ENCODE measurements at regions of chr13 and their contacts with region 1.

Region 1: DNA sequence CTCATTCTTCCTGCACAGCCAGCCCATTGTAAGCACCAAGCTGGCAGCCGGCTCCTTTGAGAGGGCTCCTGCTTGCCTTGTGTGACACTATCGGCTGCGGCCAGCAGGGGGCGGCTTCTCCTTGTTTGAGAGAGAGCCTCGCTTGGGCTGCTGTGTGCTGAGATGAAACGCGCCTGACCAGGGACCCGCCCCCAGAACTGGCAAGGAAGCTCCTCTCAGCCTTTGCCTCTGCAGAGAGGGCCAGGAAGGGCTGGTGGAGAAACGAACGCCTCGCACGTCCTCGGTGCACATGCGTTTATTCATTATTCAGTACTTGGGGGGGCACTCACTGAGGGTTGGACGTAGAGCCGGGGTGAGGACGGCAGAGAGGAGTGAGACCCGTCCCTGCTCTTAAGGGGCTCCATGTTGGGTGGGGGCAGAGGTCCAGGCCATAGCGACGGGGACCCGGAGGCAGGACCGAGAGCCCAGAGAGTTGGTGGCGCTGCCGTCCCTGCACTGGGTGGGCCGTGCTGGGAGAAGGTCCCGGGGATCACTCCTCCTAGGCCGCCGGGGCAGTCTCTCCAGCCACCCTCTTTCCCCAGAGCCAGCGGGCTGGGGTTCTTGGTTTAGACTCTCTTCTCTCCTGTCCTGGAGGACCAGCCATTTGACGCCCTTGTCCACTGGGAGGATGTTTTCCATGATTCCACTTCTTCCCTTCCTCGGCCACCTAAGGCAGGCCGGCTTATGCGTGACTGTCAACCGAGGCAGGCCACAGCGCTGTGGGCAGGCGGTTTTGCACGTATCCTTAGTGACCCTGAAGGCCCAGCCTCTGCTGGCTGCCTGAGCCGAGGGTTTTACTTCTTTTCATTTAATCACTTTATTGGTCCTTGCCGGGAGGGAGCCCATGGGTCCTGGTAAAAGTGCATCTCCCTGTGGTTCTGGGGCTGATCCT is 174.5 kb downstream of the KATNAL1 start:
- DNase-seq: peak; percentile 91 to 98 (median 95)
- ATAC-seq: peak; percentile 99
- H3K4me3 ChIP-seq: peak overlapping the region; percentile 16
- H3K4me3 Mint-ChIP-seq: peak overlapping the region in 8 of 10 donors; percentile 33 to 73 (median 64)
- H3K27ac ChIP-seq: no peak overlapping the region
- H3K27ac Mint-ChIP-seq: peak overlapping the region in 8 of 9 donors; percentile 11 to 89 (median 72)
- H3K4me1 ChIP-seq: peaks cover 4 to 7% of the 10 kb centered on the region in 2 donors
- H3K4me1 Mint-ChIP-seq: peaks cover 12 to 19% (median 17%) of the 10 kb centered on the region in 7 donors
- H3K27me3 ChIP-seq: no peaks in the 10 kb centered on the region
- H3K27me3 Mint-ChIP-seq: no peaks in the 10 kb centered on the region

Region 2: DNA sequence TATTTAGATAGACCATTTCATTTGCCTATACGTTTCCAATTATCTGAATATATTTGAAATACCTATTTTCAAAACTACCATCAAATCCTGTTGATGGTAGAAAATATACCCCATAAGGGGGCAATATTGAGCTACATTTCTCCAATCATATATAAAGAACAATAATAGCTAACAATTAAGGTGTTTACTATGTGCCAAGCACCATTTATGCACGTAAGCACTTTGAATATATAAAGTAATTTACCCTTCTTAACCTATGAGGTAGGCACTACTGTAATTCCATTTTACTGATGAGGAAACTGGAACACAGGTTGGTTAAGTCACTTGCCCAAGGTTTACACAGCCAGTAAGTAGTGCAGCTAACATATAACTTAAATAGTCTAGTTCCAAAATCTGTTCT is 361.6 kb before region 1 on chr13:
- CTCF ChIA-PET with region 1: interaction called, 23 read pairs
- POLR2A ChIA-PET with region 1: no interaction called
- intact Hi-C with region 1: no loop called
- DNase-seq: peak in 7 of 9 donors; percentile 31 to 67 (median 52)
- ATAC-seq: peak; percentile 77
- H3K4me3 ChIP-seq: no peak overlapping the region
- H3K4me3 Mint-ChIP-seq: no peak overlapping the region
- H3K27ac ChIP-seq: no peak overlapping the region
- H3K27ac Mint-ChIP-seq: peak overlapping the region in 1 of 9 donors; percentile 11
- H3K4me1 ChIP-seq: no peaks in the 10 kb centered on the region
- H3K4me1 Mint-ChIP-seq: peaks cover 0 to 14% (median 4%) of the 10 kb centered on the region in 7 donors
- H3K27me3 ChIP-seq: no peaks in the 10 kb centered on the region
- H3K27me3 Mint-ChIP-seq: no peaks in the 10 kb centered on the region

Region 3: GRCh38 chr13:29978211-29978610 is 154.7 kb before region 1 on chr13:
- CTCF ChIA-PET with region 1: no interaction called
- POLR2A ChIA-PET with region 1: no interaction called
- intact Hi-C with region 1: no loop called
- DNase-seq: no peak
- ATAC-seq: no peak
- H3K4me3 ChIP-seq: no peak overlapping the region
- H3K4me3 Mint-ChIP-seq: no peak overlapping the region
- H3K27ac ChIP-seq: no peak overlapping the region
- H3K27ac Mint-ChIP-seq: no peak overlapping the region
- H3K4me1 ChIP-seq: no peaks in the 10 kb centered on the region
- H3K4me1 Mint-ChIP-seq: peaks cover 0 to 10% (median 0%) of the 10 kb centered on the region in 7 donors
- H3K27me3 ChIP-seq: no peaks in the 10 kb centered on the region
- H3K27me3 Mint-ChIP-seq: peaks cover 0 to 13% (median 0%) of the 10 kb centered on the region in 5 donors

Region 4: GRCh38 chr13:30148171-30148754 is 15.4 kb after region 1 on chr13:
- CTCF ChIA-PET with region 1: interaction called, 100 read pairs
- POLR2A ChIA-PET with region 1: interaction called, 16 read pairs
- intact Hi-C with region 1: loop called (anchors 1 kb)
- DNase-seq: peak in 7 of 9 donors; percentile 43 to 83 (median 69)
- ATAC-seq: peak; percentile 89
- H3K4me3 ChIP-seq: peak overlapping the region; percentile 7
- H3K4me3 Mint-ChIP-seq: peak overlapping the region; percentile 43 to 81 (median 75)
- H3K27ac ChIP-seq: peak overlapping the region; percentile 37
- H3K27ac Mint-ChIP-seq: peak overlapping the region; percentile 87 to 98 (median 93)
- H3K4me1 ChIP-seq: peaks cover 59 to 83% of the 10 kb centered on the region in 2 donors
- H3K4me1 Mint-ChIP-seq: peaks cover 41 to 96% (median 88%) of the 10 kb centered on the region in 7 donors
- H3K27me3 ChIP-seq: no peaks in the 10 kb centered on the region
- H3K27me3 Mint-ChIP-seq: no peaks in the 10 kb centered on the region

Region 5: GRCh38 chr13:30257468-30258099 is 124.7 kb after region 1 on chr13:
- CTCF ChIA-PET with region 1: interaction called, 4 read pairs
- POLR2A ChIA-PET with region 1: no interaction called
- intact Hi-C with region 1: loop called in 1 of 2 experiments (anchors 2 kb)
- DNase-seq: no peak
- ATAC-seq: no peak
- H3K4me3 ChIP-seq: no peak overlapping the region
- H3K4me3 Mint-ChIP-seq: no peak overlapping the region
- H3K27ac ChIP-seq: no peak overlapping the region
- H3K27ac Mint-ChIP-seq: peak overlapping the region in 2 of 9 donors; percentile 18 to 62
- H3K4me1 ChIP-seq: no peaks in the 10 kb centered on the region
- H3K4me1 Mint-ChIP-seq: peaks cover 0 to 21% (median 14%) of the 10 kb centered on the region in 7 donors
- H3K27me3 ChIP-seq: no peaks in the 10 kb centered on the region
- H3K27me3 Mint-ChIP-seq: no peaks in the 10 kb centered on the region

Region 6: GRCh38 chr13:30346153-30346788 is 213.4 kb after region 1 on chr13:
- CTCF ChIA-PET with region 1: interaction called, 3 read pairs
- POLR2A ChIA-PET with region 1: no interaction called
- intact Hi-C with region 1: loop called in 1 of 2 experiments (anchors 2 kb)
- DNase-seq: peak in 7 of 9 donors; percentile 59 to 86 (median 73)
- ATAC-seq: peak; percentile 94
- H3K4me3 ChIP-seq: peak overlapping the region; percentile 7
- H3K4me3 Mint-ChIP-seq: peak overlapping the region; percentile 46 to 82 (median 75)
- H3K27ac ChIP-seq: no peak overlapping the region
- H3K27ac Mint-ChIP-seq: peak overlapping the region; percentile 23 to 84 (median 62)
- H3K4me1 ChIP-seq: peaks cover 29 to 31% of the 10 kb centered on the region in 2 donors
- H3K4me1 Mint-ChIP-seq: peaks cover 35 to 60% (median 48%) of the 10 kb centered on the region in 7 donors
- H3K27me3 ChIP-seq: no peaks in the 10 kb centered on the region
- H3K27me3 Mint-ChIP-seq: peaks cover 0 to 2% (median 0%) of the 10 kb centered on the region in 5 donors

Region 7: GRCh38 chr13:30572859-30573275 is 440.0 kb after region 1 on chr13:
- CTCF ChIA-PET with region 1: interaction called, 6 read pairs
- POLR2A ChIA-PET with region 1: no interaction called
- intact Hi-C with region 1: loop called (anchors 1 to 2 kb)
- DNase-seq: peak in 7 of 9 donors; percentile 19 to 65 (median 49)
- ATAC-seq: peak; percentile 69
- H3K4me3 ChIP-seq: peak overlapping the region; percentile 55
- H3K4me3 Mint-ChIP-seq: peak overlapping the region; percentile 66 to 88 (median 81)
- H3K27ac ChIP-seq: peak overlapping the region; percentile 81
- H3K27ac Mint-ChIP-seq: peak overlapping the region; percentile 88 to 97 (median 94)
- H3K4me1 ChIP-seq: peaks cover 13 to 24% of the 10 kb centered on the region in 2 donors
- H3K4me1 Mint-ChIP-seq: peaks cover 14 to 42% (median 36%) of the 10 kb centered on the region in 7 donors
- H3K27me3 ChIP-seq: no peaks in the 10 kb centered on the region
- H3K27me3 Mint-ChIP-seq: peaks cover 0 to 3% (median 0%) of the 10 kb centered on the region in 5 donors

Region 8: DNA sequence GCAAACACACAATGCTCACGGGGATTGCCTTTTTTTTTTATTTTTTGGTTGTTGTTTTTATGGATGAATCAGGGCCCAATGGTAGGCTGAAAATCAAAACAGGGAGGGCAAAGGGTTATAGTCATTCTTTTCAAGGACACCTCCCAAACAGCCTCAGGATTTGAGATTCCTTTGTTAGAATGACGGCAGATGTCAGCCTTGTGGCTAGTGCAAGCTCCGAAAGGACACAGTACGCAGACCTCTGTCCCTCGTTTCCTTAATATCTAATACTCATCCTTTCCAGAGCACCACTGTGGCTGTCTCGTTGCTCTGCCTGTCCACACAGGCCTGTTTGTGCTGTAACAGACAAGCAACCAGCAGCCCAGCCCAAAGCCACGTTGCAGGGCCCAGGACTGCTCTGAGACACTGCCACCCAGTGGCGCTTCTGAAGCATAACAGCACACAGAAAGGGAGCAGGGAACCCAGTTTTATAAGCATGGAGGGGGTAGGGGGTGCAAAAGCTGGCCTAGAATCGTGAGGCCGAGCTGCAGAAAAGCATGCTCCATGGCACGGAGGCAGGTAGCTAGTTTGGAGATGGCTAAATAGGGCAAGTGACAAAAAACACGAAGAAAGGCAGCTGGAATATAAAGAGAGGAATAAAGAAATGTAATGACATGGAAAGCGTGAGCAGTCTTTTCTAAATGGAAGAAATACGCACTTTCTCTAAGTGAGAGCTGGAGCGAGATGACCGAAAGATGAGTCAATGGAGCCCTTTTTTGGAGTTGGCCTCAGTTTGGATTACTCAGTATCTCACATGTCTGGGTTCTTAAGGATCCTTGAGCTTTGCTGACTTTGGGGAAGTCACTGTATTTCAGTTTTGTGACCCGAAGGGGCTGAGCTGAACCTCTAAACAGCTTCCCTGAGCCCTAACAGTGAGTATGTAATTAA is 732.5 kb after region 1 on chr13:
- CTCF ChIA-PET with region 1: interaction called, 3 read pairs
- POLR2A ChIA-PET with region 1: no interaction called
- intact Hi-C with region 1: loop called (anchors 1 to 10 kb)
- DNase-seq: peak; percentile 7 to 46 (median 34)
- ATAC-seq: peak; percentile 91
- H3K4me3 ChIP-seq: no peak overlapping the region
- H3K4me3 Mint-ChIP-seq: no peak overlapping the region
- H3K27ac ChIP-seq: no peak overlapping the region
- H3K27ac Mint-ChIP-seq: no peak overlapping the region
- H3K4me1 ChIP-seq: no peaks in the 10 kb centered on the region
- H3K4me1 Mint-ChIP-seq: peaks cover 0 to 9% (median 4%) of the 10 kb centered on the region in 7 donors
- H3K27me3 ChIP-seq: no peaks in the 10 kb centered on the region
- H3K27me3 Mint-ChIP-seq: peaks cover 5 to 25% (median 8%) of the 10 kb centered on the region in 5 donors